ENCODE measurements at regions of chr2 and their contacts with region 1.

Region 1: GRCh38 chr2:60881047-60881932 is at the start of gene REL:
- DNase-seq: peak; percentile 75 to 98 (median 84)
- ATAC-seq: peak; percentile 83
- H3K4me3 ChIP-seq: peak within 1 kb of the TSS; percentile 94
- H3K4me3 Mint-ChIP-seq: peak within 1 kb of the TSS; percentile 96
- H3K27ac ChIP-seq: peak within 1 kb of the TSS; percentile 100
- H3K27ac Mint-ChIP-seq: peak within 1 kb of the TSS; percentile 98
- H3K4me1 ChIP-seq: peaks cover 5% of the 10 kb centered on the region
- H3K4me1 Mint-ChIP-seq: peaks cover 42% of the 10 kb centered on the region
- H3K27me3 ChIP-seq: no peaks in the 10 kb centered on the region
- H3K27me3 Mint-ChIP-seq: no peaks in the 10 kb centered on the region
- CTCF ChIP-seq: no peak
- total RNA-seq, gene REL: 91.9 to 99.9 TPM

Region 2: DNA sequence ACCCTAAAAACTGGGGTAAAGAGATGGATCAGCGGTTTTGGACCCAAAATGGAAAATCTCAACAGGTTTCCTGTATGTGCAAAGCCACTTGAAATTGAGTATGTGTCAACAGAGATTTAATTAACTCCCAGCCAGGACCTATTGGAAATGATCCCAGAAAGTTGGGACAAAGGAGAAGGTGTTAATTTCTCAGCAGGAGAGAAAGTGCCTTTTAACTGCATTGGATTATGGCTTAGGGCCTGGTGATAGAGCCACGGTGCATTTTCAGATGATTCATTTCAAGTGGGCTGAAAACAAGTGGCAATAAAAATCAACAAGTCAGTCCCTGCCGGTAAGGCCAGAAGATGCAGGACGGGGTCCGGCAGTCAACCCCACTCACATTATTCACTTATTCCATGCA is 247.7 kb before region 1 on chr2:
- CTCF ChIA-PET with region 1: no interaction called
- POLR2A ChIA-PET with region 1: no interaction called
- intact Hi-C with region 1: no loop called
- DNase-seq: no peak
- ATAC-seq: no peak
- H3K4me3 ChIP-seq: no peak overlapping the region
- H3K4me3 Mint-ChIP-seq: no peak overlapping the region
- H3K27ac ChIP-seq: no peak overlapping the region
- H3K27ac Mint-ChIP-seq: no peak overlapping the region
- H3K4me1 ChIP-seq: no peaks in the 10 kb centered on the region
- H3K4me1 Mint-ChIP-seq: no peaks in the 10 kb centered on the region
- H3K27me3 ChIP-seq: peaks cover 0 to 10% of the 10 kb centered on the region in 2 experiments
- H3K27me3 Mint-ChIP-seq: peaks cover 21% of the 10 kb centered on the region
- CTCF ChIP-seq: no peak

Region 3: DNA sequence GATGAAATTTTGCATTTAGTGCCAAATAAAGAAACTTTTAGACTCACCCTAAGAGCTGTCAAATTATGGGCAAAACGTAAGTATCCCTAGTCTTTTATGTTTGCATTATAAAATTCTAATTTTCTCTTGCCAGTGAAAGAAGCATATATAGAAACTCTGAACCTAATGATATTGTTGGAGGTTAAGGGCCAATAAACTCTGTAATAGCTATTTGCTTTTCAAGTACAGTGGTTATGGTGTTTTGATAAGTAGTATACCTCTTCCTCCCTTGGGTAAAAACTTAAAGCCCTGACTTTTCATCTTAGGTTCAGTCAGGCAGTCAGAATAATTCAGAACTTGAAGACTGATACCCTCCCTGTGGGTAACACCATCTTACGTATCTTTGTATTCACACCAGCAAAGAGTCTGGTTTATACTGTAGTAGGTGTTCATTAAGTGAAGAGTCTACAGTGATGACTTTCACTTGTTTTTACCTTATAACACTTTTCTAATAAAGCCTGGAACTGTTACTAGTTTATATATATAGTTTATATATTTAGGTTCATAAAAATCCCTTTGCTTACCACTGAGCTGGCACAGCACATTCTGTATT is 106.1 kb before region 1 on chr2:
- CTCF ChIA-PET with region 1: no interaction called
- POLR2A ChIA-PET with region 1: no interaction called
- intact Hi-C with region 1: no loop called
- DNase-seq: no peak
- ATAC-seq: no peak
- H3K4me3 ChIP-seq: no peak overlapping the region
- H3K4me3 Mint-ChIP-seq: no peak overlapping the region
- H3K27ac ChIP-seq: no peak overlapping the region
- H3K27ac Mint-ChIP-seq: no peak overlapping the region
- H3K4me1 ChIP-seq: no peaks in the 10 kb centered on the region
- H3K4me1 Mint-ChIP-seq: peaks cover 1% of the 10 kb centered on the region
- H3K27me3 ChIP-seq: no peaks in the 10 kb centered on the region
- H3K27me3 Mint-ChIP-seq: no peaks in the 10 kb centered on the region
- CTCF ChIP-seq: no peak

Region 4: DNA sequence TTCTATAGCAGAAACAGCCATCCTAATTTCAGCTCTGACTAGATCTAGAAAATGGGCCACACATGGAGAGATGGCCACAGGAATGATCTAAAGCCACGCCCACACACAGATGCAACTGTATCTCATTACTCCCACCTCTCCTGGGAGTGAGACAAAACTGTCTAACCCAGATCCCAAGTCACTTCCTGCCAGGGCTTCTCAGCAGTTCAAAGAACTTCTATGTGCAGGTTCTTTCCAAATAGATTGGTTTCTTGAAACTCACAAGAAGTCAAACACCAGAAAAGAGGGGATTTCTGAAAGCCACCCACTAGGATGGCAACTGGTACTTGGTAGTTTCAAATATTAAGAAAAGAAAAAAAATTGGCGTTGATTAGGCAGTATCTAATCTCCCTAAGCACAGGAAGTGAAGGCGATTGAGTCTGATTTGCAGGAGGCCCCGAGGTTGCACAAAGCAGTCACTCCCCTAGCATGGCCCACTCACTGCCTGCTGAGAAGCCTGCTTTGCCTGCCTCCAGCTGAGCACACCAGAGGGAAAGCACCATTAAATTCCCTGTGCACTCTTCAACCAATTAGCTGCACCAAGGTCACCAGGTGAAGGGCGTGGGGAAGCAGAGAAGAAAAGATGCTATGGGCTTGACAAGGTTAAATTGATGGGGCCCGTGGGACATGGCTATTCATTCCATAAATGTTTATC is 74.2 kb before region 1 on chr2:
- CTCF ChIA-PET with region 1: interaction called, 14 read pairs
- POLR2A ChIA-PET with region 1: interaction called, 48 read pairs
- intact Hi-C with region 1: loop called in 1 of 2 experiments (anchors 1 kb)
- DNase-seq: peak in 6 of 14 experiments; percentile 4 to 73 (median 44)
- ATAC-seq: peak; percentile 77
- H3K4me3 ChIP-seq: no peak overlapping the region
- H3K4me3 Mint-ChIP-seq: peak overlapping the region; percentile 49
- H3K27ac ChIP-seq: peak overlapping the region in 1 of 2 donors; percentile 58
- H3K27ac Mint-ChIP-seq: peak overlapping the region; percentile 79
- H3K4me1 ChIP-seq: peaks cover 45% of the 10 kb centered on the region
- H3K4me1 Mint-ChIP-seq: peaks cover 51% of the 10 kb centered on the region
- H3K27me3 ChIP-seq: no peaks in the 10 kb centered on the region
- H3K27me3 Mint-ChIP-seq: no peaks in the 10 kb centered on the region
- CTCF ChIP-seq: no peak

Region 5: GRCh38 chr2:60867848-60868247 is 13.4 kb before region 1 on chr2:
- CTCF ChIA-PET with region 1: interaction called, 4 read pairs
- POLR2A ChIA-PET with region 1: interaction called, 52 read pairs
- intact Hi-C with region 1: no loop called
- DNase-seq: peak in 8 of 14 experiments; percentile 11 to 84 (median 38)
- ATAC-seq: peak; percentile 89
- H3K4me3 ChIP-seq: no peak overlapping the region
- H3K4me3 Mint-ChIP-seq: peak overlapping the region; percentile 43
- H3K27ac ChIP-seq: peak overlapping the region in 1 of 2 donors; percentile 46
- H3K27ac Mint-ChIP-seq: peak overlapping the region; percentile 71
- H3K4me1 ChIP-seq: peaks cover 17% of the 10 kb centered on the region
- H3K4me1 Mint-ChIP-seq: peaks cover 16% of the 10 kb centered on the region
- H3K27me3 ChIP-seq: no peaks in the 10 kb centered on the region
- H3K27me3 Mint-ChIP-seq: no peaks in the 10 kb centered on the region
- CTCF ChIP-seq: no peak

Region 6: GRCh38 chr2:60992985-60993392 is 111.7 kb after region 1 on chr2:
- CTCF ChIA-PET with region 1: no interaction called
- POLR2A ChIA-PET with region 1: interaction called, 11 read pairs
- intact Hi-C with region 1: loop called in 1 of 2 experiments (anchors 10 kb)
- DNase-seq: peak in 4 of 14 experiments; percentile 12 to 82 (median 68)
- ATAC-seq: peak; percentile 68
- H3K4me3 ChIP-seq: peak overlapping the region; percentile 2
- H3K4me3 Mint-ChIP-seq: peak overlapping the region; percentile 56
- H3K27ac ChIP-seq: no peak overlapping the region
- H3K27ac Mint-ChIP-seq: peak overlapping the region; percentile 73
- H3K4me1 ChIP-seq: peaks cover 5% of the 10 kb centered on the region
- H3K4me1 Mint-ChIP-seq: peaks cover 8% of the 10 kb centered on the region
- H3K27me3 ChIP-seq: no peaks in the 10 kb centered on the region
- H3K27me3 Mint-ChIP-seq: no peaks in the 10 kb centered on the region
- CTCF ChIP-seq: no peak

Region 7: GRCh38 chr2:61016808-61017555 is 135.7 kb after region 1 on chr2:
- CTCF ChIA-PET with region 1: no interaction called
- POLR2A ChIA-PET with region 1: interaction called, 11 read pairs
- intact Hi-C with region 1: loop called in 1 of 2 experiments (anchors 5 kb)
- DNase-seq: peak; percentile 39 to 83 (median 58)
- ATAC-seq: peak; percentile 73
- H3K4me3 ChIP-seq: peak overlapping the region; percentile 64
- H3K4me3 Mint-ChIP-seq: peak overlapping the region; percentile 100
- H3K27ac ChIP-seq: peak overlapping the region; percentile 71 to 85
- H3K27ac Mint-ChIP-seq: peak overlapping the region; percentile 89
- H3K4me1 ChIP-seq: peaks cover 10% of the 10 kb centered on the region
- H3K4me1 Mint-ChIP-seq: peaks cover 46% of the 10 kb centered on the region
- H3K27me3 ChIP-seq: no peaks in the 10 kb centered on the region
- H3K27me3 Mint-ChIP-seq: no peaks in the 10 kb centered on the region
- CTCF ChIP-seq: no peak